Activated CD4-positive, alpha-beta T cell treated with anti-CD3 and anti-CD28 coated beads for 36 hours (primary cell): ENCODE measurements at regions of chr1 and their contacts with region 1.

Region 1: GRCh38 chr1:20248971-20249612 is 41.6 kb upstream of the VWA5B1 start:
- DNase-seq: peak; percentile 71
- ATAC-seq: peak; percentile 91
- H3K4me3 Mint-ChIP-seq: peak overlapping the region; percentile 16
- H3K27ac Mint-ChIP-seq: peak overlapping the region; percentile 84
- H3K4me1 Mint-ChIP-seq: peaks cover 19% of the 10 kb centered on the region
- H3K27me3 Mint-ChIP-seq: peaks cover 4% of the 10 kb centered on the region

Region 2: GRCh38 chr1:20322081-20322824 is 73.2 kb after region 1 on chr1:
- CTCF ChIA-PET with region 1: no interaction called
- POLR2A ChIA-PET with region 1: no interaction called
- intact Hi-C with region 1: loop called in 1 of 2 experiments (anchors 1 kb)
- DNase-seq: peak; percentile 55
- ATAC-seq: peak; percentile 82
- H3K4me3 Mint-ChIP-seq: peak overlapping the region; percentile 7
- H3K27ac Mint-ChIP-seq: peak overlapping the region; percentile 20
- H3K4me1 Mint-ChIP-seq: peaks cover 31% of the 10 kb centered on the region
- H3K27me3 Mint-ChIP-seq: peaks cover 19% of the 10 kb centered on the region